ENCODE measurements at regions of chr5 and their contacts with region 1.

Region 1: DNA sequence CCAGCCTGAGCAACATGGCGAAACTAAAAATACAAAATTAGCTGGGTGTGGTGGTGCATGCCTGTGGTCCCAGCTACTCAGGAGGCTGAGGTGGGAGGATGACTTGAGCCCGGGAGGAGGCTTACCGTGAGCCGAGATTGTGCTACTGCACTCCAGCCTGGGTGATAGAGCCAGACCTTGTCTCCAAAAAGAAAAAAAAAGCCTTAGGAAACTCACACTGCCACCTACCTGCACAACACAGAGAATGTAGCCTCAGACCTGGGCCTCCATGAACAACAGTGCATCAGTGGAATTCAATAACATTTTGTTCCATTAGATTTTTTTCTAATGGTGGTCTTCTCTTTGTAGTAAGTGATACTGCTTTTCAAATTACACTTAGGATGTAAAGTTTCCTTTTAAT is 63.8 kb upstream of the RARS1 start:
- DNase-seq: no peak
- H3K4me3 ChIP-seq: no peak overlapping the region
- H3K27ac ChIP-seq: no peak overlapping the region
- H3K4me1 ChIP-seq: no peaks in the 10 kb centered on the region
- H3K27me3 ChIP-seq: no peaks in the 10 kb centered on the region
- CTCF ChIP-seq: peak; percentile 62

Region 2: DNA sequence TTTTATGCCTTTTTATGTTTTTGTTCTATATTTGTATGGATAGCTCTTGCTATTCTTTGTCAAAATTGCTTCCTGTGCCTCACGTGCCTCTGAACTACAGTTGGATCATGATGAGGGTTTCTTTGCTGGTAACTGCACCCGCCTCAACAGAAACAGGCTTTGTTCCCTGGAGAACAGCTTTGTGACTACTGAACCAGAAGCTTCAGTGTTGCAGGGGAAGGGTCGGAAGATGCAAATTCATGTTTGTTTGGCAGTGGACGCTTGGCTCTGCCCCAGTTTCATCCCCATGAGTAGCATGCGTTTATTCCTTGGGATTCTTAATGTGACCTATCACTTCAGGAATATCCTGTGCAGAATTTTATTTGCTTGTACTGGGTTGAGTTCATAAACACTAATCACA is 1090.1 kb before region 1 on chr5:
- CTCF ChIA-PET with region 1: no interaction called
- POLR2A ChIA-PET with region 1: no interaction called
- intact Hi-C with region 1: no loop called
- DNase-seq: no peak
- H3K4me3 ChIP-seq: no peak overlapping the region
- H3K27ac ChIP-seq: no peak overlapping the region
- H3K4me1 ChIP-seq: no peaks in the 10 kb centered on the region
- H3K27me3 ChIP-seq: 0 out of 2 replicates have a peak, but pooled peaks cover 8% of the 10 kb centered on the region
- CTCF ChIP-seq: no peak

Region 3: GRCh38 chr5:168135897-168136296 is 286.5 kb before region 1 on chr5:
- CTCF ChIA-PET with region 1: no interaction called
- POLR2A ChIA-PET with region 1: no interaction called
- intact Hi-C with region 1: no loop called
- DNase-seq: no peak
- H3K4me3 ChIP-seq: no peak overlapping the region
- H3K27ac ChIP-seq: no peak overlapping the region
- H3K4me1 ChIP-seq: no peaks in the 10 kb centered on the region
- H3K27me3 ChIP-seq: peaks cover 80% of the 10 kb centered on the region
- CTCF ChIP-seq: no peak

Region 4: GRCh38 chr5:168464214-168464613 is 41.8 kb after region 1 on chr5:
- CTCF ChIA-PET with region 1: no interaction called
- POLR2A ChIA-PET with region 1: no interaction called
- intact Hi-C with region 1: no loop called
- DNase-seq: no peak
- H3K4me3 ChIP-seq: no peak overlapping the region
- H3K27ac ChIP-seq: no peak overlapping the region
- H3K4me1 ChIP-seq: no peaks in the 10 kb centered on the region
- H3K27me3 ChIP-seq: no peaks in the 10 kb centered on the region
- CTCF ChIP-seq: no peak

Region 5: GRCh38 chr5:168552146-168552545 is 129.7 kb after region 1 on chr5:
- CTCF ChIA-PET with region 1: no interaction called
- POLR2A ChIA-PET with region 1: no interaction called
- intact Hi-C with region 1: no loop called
- DNase-seq: no peak
- H3K4me3 ChIP-seq: no peak overlapping the region
- H3K27ac ChIP-seq: no peak overlapping the region
- H3K4me1 ChIP-seq: no peaks in the 10 kb centered on the region
- H3K27me3 ChIP-seq: no peaks in the 10 kb centered on the region
- CTCF ChIP-seq: no peak

Region 6: GRCh38 chr5:169029661-169030274 is 607.3 kb after region 1 on chr5:
- CTCF ChIA-PET with region 1: no interaction called
- POLR2A ChIA-PET with region 1: interaction called, 10 read pairs
- intact Hi-C with region 1: no loop called
- DNase-seq: no peak
- H3K4me3 ChIP-seq: no peak overlapping the region
- H3K27ac ChIP-seq: no peak overlapping the region
- H3K4me1 ChIP-seq: no peaks in the 10 kb centered on the region
- H3K27me3 ChIP-seq: peaks cover 9% of the 10 kb centered on the region
- CTCF ChIP-seq: no peak

Measured in PC-9 (cell line).